ENCODE measurements at regions of chr2 and their contacts with region 1.

Region 1: DNA sequence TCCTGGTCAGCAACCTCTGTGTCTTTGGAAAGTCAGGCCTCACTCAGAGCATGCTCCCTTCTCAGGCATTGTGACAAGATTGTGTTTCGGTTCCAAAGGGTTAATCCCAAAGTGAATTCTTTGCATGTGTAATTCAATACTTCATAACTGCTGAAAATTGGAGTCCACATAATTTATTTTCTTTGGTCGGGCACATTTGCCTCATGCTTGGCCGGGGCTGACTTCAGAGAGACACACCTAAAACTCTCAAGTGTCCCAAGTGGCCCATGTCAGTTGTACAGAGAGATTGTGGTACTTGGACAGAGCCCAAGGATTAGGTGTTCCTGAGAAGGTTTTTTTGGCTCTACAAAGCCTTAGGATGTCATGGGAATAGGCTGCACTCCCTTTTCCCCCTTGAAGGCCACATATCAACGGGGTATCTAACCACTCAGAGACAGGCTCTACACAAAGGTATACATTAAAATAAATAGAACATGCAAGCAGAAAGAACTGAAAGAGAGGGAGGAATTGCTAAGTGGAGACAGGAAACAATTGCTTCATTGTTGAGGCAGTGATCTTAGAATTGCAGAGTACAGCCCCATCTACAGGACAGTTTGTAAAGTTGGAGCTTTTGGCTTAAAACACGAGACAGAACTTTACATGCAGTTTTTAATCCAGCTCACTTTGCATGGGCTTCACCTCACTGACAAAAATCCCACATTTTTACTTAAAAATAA is 1232.3 kb upstream of the ZEB2 start:
- DNase-seq: peak; percentile 85
- H3K4me3 ChIP-seq: no peak overlapping the region
- H3K27ac ChIP-seq: peak overlapping the region; percentile 41
- H3K4me1 ChIP-seq: peaks cover 25% of the 10 kb centered on the region
- H3K27me3 ChIP-seq: no peaks in the 10 kb centered on the region
- CTCF ChIP-seq: peak; percentile 64 to 66
- POLR2A ChIP-seq: no peak

Region 2: GRCh38 chr2:144426981-144427479 is 1325.2 kb before region 1 on chr2:
- CTCF ChIA-PET with region 1: no interaction called
- POLR2A ChIA-PET with region 1: no interaction called
- dilution Hi-C with region 1: no loop called
- intact Hi-C with region 1: loop called (anchors 5 kb)
- DNase-seq: peak; percentile 82
- H3K4me3 ChIP-seq: no peak overlapping the region
- H3K27ac ChIP-seq: peak overlapping the region; percentile 76
- H3K4me1 ChIP-seq: peaks cover 16% of the 10 kb centered on the region
- H3K27me3 ChIP-seq: no peaks in the 10 kb centered on the region
- CTCF ChIP-seq: no peak
- POLR2A ChIP-seq: no peak

Region 3: GRCh38 chr2:144937910-144938709 is 814.1 kb before region 1 on chr2:
- CTCF ChIA-PET with region 1: interaction called, 4 read pairs
- POLR2A ChIA-PET with region 1: no interaction called
- dilution Hi-C with region 1: no loop called
- intact Hi-C with region 1: loop called (anchors 2 kb)
- DNase-seq: peak; percentile 92
- H3K4me3 ChIP-seq: no peak overlapping the region
- H3K27ac ChIP-seq: peak overlapping the region; percentile 59
- H3K4me1 ChIP-seq: peaks cover 40% of the 10 kb centered on the region
- H3K27me3 ChIP-seq: no peaks in the 10 kb centered on the region
- CTCF ChIP-seq: no peak
- POLR2A ChIP-seq: no peak

Region 4: GRCh38 chr2:145207884-145208283 is 544.4 kb before region 1 on chr2:
- CTCF ChIA-PET with region 1: interaction called, 3 read pairs
- POLR2A ChIA-PET with region 1: no interaction called
- dilution Hi-C with region 1: no loop called
- intact Hi-C with region 1: loop called (anchors 5 kb)
- DNase-seq: peak; percentile 94
- H3K4me3 ChIP-seq: no peak overlapping the region
- H3K27ac ChIP-seq: peak overlapping the region; percentile 23
- H3K4me1 ChIP-seq: peaks cover 14% of the 10 kb centered on the region
- H3K27me3 ChIP-seq: no peaks in the 10 kb centered on the region
- CTCF ChIP-seq: no peak
- POLR2A ChIP-seq: no peak

Region 5: GRCh38 chr2:145617906-145618305 is 134.3 kb before region 1 on chr2:
- CTCF ChIA-PET with region 1: no interaction called
- POLR2A ChIA-PET with region 1: no interaction called
- dilution Hi-C with region 1: no loop called
- intact Hi-C with region 1: no loop called
- DNase-seq: no peak
- H3K4me3 ChIP-seq: no peak overlapping the region
- H3K27ac ChIP-seq: no peak overlapping the region
- H3K4me1 ChIP-seq: no peaks in the 10 kb centered on the region
- H3K27me3 ChIP-seq: no peaks in the 10 kb centered on the region
- CTCF ChIP-seq: no peak
- POLR2A ChIP-seq: no peak

Region 6: DNA sequence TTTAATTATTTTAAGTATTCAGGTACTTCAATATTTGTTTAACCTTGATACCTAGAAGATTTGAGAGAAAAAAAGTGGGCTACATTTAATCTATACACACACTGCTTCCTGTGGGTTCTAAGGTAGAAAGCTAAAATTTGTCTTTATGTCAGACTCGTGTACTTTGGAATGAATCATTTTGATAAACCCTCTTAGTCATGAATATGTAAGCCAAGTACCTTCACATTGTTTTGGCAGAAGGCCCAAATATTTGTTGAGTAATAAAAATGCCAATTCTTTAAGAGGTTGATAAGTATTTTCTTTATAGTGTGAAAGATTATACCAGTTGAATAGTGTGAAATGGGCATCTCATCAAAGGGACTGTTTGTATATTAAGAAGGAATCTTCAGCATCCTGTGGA is 232.3 kb after region 1 on chr2:
- CTCF ChIA-PET with region 1: no interaction called
- POLR2A ChIA-PET with region 1: no interaction called
- dilution Hi-C with region 1: no loop called
- intact Hi-C with region 1: loop called (anchors 5 kb)
- DNase-seq: peak; percentile 91
- H3K4me3 ChIP-seq: no peak overlapping the region
- H3K27ac ChIP-seq: peak overlapping the region; percentile 40
- H3K4me1 ChIP-seq: peaks cover 24% of the 10 kb centered on the region
- H3K27me3 ChIP-seq: no peaks in the 10 kb centered on the region
- CTCF ChIP-seq: no peak
- POLR2A ChIP-seq: no peak

Region 7: DNA sequence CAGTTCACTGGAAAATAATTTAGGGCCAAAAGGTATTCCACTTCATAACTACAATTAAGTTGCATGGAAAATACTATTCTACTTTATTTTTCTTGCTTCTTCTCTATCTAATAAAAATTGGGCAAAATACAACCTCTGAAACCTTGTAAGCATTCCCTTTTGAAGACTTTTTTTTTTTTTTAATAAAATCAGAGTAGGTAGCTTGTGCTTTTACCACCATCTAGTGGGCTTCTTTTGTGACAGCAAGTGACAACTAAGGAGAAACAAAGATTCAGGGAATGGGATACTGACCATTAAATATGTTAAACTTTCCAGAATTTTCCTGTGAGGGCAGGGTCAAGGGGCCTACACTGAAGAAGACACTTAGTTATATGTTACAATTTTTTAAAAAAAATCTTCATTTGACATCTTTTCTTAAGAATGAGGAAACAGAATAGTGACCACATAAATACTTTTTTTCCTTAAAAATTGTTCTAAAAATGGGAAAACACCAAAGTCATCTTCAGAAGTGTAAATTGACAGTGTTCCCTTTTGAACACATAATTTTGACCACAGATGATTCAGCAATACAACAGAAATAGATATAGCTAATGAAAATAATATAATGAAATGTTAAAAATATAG is 909.3 kb after region 1 on chr2:
- CTCF ChIA-PET with region 1: interaction called, 3 read pairs
- POLR2A ChIA-PET with region 1: no interaction called
- dilution Hi-C with region 1: no loop called
- intact Hi-C with region 1: loop called (anchors 5 kb)
- DNase-seq: peak; percentile 56
- H3K4me3 ChIP-seq: no peak overlapping the region
- H3K27ac ChIP-seq: no peak overlapping the region
- H3K4me1 ChIP-seq: peaks cover 6% of the 10 kb centered on the region
- H3K27me3 ChIP-seq: no peaks in the 10 kb centered on the region
- CTCF ChIP-seq: peak; percentile 26 to 50
- POLR2A ChIP-seq: no peak